ENCODE measurements at regions of chr13 and their contacts with region 1.

Region 1: DNA sequence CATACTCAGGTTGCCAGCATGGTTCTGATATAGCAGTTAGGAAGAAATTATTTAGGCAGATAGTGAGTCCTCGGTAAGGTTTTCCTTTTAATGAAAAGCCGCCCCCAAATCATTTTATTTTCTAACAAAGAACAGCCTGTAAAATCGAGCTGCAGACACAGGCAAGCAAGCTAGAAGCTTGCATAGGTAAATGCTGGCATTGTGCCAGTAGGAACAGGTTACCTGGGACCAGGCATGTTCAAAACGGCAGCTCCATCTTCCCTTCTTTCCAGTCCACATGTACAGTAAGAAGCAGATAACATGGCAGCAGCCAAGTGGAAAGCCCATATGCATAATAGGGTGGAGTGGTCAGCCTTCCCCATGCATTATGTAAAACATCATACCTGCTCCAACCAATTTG is 71.1 kb downstream of the UGGT2 start:
- DNase-seq: no peak
- CTCF ChIP-seq: no peak

Region 2: DNA sequence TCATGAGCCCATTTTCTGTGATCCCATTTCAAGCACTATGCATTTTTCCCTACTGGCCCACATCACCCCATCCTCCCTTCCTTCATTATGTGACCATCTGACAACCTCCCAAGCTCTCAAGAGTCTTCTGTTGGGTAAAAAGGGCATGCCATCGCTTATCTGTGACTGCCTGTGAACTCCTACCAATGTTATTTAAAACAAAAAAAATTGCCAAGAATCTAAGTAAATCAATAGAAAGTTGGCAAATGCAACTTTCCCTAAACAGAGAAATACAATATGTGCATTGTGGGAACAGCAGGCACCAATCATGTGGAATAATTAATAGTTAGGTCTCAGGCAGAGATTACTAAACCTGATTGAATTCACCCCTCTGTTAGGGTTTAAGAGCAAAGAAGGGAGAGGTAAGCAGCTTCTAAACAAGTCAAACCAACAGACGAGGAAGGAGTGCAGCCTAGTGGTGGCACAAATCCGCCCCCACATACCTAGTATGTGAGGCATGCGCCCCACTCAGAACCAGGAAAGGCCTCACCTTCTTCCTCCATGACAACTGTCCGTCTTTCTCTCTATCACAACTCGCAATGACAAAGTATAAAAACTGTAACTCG is 367.4 kb before region 1 on chr13:
- CTCF ChIA-PET with region 1: no interaction called
- POLR2A ChIA-PET with region 1: no interaction called
- DNase-seq: no peak
- CTCF ChIP-seq: no peak

Region 3: DNA sequence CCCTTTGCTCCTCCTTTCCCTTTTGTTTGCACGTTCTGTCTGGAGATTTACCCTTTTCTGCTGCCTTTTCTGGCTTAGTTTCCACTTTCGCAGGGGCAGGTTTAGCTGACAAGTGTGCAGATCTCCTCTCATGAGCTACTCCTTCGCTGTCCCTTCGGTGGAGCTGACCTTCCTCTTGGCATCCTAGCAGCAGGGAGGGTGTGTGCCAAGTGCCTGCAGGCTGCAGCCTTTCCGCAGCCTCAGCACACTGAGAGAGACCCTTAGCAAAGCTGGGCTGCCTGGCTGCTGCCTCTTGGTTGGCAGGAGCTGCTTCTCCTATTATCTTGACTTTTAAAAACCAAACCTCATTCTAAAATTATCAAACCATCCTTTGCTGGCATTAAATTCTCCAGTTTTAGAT is 172.7 kb before region 1 on chr13:
- CTCF ChIA-PET with region 1: no interaction called
- POLR2A ChIA-PET with region 1: no interaction called
- DNase-seq: no peak
- CTCF ChIP-seq: no peak

Region 4: DNA sequence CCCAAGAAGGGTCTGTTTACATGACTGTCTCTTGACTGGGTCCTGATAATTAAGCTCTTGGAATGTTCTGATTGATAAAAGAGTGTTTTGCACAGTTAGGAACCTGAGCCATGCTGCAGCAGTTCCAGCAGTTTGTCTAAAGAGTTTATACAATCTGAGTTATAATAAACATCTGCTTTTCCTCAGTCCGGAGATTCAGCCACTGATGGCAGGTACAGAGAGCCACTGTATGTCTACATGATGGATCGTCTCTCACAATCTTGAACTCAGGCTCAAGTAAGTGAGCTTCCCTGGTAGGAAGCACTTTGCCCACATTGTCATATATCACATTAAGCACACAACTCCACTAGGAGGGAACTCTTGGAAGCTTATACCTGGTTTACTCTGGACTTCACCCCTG is 13.2 kb before region 1 on chr13:
- CTCF ChIA-PET with region 1: interaction called, 10 read pairs
- POLR2A ChIA-PET with region 1: no interaction called
- DNase-seq: no peak
- CTCF ChIP-seq: no peak